CD8-positive, alpha-beta T cell (primary cell): ENCODE measurements at regions of chr11 and their contacts with region 1.

Region 1: DNA sequence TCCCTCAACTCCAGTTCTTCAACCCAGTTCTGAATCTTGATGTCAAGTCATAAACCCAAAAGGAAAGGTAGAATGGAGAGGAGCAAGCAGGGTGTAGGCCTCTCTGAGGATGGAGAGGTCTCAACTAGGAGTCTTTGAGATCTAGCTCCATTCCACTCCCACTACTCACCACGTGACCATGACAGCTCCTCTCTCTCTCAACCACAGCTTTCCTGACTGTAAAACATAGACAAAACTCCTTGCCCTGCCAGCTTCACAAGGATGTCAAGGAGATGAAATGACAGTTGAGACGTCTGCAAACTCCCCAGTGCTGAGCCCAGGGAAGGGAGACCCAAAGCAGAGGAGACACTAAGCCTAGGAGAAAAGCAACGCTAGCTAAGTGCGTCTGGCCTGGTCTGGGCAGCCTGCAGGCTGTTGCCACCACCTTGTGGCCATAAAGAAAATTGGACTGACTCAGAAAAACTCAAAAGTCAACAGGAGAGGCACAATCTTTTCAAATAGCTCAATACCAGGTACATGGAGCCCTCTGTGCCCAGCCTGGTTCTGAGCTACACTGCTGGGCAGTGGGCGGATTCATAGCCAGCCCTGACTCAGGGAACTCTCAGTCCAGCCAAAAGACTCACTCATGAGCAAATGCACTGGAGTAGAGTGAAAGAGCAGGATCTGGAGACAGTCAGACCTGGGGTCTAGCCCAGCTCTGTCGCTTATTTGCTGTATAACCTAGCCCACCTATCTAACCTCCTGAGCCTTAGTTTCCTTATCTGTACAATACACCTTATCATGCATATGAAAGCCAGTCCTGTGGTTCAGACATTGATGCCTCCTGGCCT is 3.4 kb downstream of the CLPB start:
- DNase-seq: peak in 5 of 9 experiments; percentile 29 to 64 (median 49)
- ATAC-seq: no peak
- H3K4me3 ChIP-seq: no peak overlapping the region
- H3K4me3 Mint-ChIP-seq: no peak overlapping the region
- H3K27ac ChIP-seq: no peak overlapping the region
- H3K27ac Mint-ChIP-seq: peak overlapping the region; percentile 23
- H3K4me1 ChIP-seq: peaks cover 9% of the 10 kb centered on the region
- H3K4me1 Mint-ChIP-seq: peaks cover 36% of the 10 kb centered on the region
- H3K27me3 ChIP-seq: no peaks in the 10 kb centered on the region
- H3K27me3 Mint-ChIP-seq: no peaks in the 10 kb centered on the region
- CTCF ChIP-seq: peak; percentile 58

Region 2: DNA sequence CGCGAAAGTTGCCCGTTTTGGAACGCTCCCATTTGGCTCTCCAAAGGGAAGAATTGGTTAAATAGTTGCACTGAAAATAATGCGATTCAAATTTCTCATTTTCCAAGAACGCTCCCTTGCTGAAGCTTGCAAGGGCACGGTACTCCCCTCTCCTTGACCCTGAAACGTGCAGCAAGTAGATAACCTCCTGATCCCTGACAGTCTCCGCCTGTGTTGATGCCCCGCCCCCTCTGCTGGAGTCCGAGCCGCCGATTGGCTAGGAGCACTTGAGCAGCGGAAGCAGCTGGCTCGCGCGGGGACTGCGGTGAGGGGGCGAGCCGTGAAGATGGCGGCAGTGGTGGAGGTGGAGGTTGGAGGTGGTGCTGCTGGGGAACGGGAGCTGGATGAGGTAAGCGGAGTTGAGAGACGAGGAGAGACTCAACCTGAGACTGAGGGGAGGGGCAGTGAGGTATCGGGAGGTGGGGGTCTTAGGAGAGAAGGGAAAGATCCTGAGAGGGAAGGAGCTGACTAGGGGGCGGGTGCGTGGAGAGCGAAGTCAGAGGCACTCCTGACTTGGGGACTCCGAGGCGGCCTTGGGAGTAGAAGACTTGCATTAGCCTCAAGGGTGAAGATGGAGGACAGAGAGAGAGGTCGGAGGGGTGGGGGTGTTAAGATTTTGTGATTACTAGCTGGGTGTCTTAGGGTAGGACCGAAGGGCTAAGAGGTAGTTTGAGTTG is 502.1 kb before region 1 on chr11 and contains the start of gene RNF121:
- CTCF ChIA-PET with region 1: no interaction called
- POLR2A ChIA-PET with region 1: no interaction called
- intact Hi-C with region 1: loop called in 1 of 2 experiments (anchors 1 kb)
- DNase-seq: peak; percentile 94 to 99 (median 97)
- ATAC-seq: peak; percentile 86
- H3K4me3 ChIP-seq: peak within 1 kb of the TSS; percentile 67 to 98
- H3K4me3 Mint-ChIP-seq: peak within 1 kb of the TSS; percentile 100
- H3K27ac ChIP-seq: peak within 1 kb of the TSS; percentile 90 to 96
- H3K27ac Mint-ChIP-seq: peak within 1 kb of the TSS; percentile 99
- H3K4me1 ChIP-seq: peaks cover 22% of the 10 kb centered on the region
- H3K4me1 Mint-ChIP-seq: peaks cover 57% of the 10 kb centered on the region
- H3K27me3 ChIP-seq: no peaks in the 10 kb centered on the region
- H3K27me3 Mint-ChIP-seq: no peaks in the 10 kb centered on the region
- CTCF ChIP-seq: no peak
- total RNA-seq, gene RNF121: 8.5 to 9.0 TPM

Region 3: GRCh38 chr11:71940561-71941219 is 490.3 kb before region 1 on chr11:
- CTCF ChIA-PET with region 1: no interaction called
- POLR2A ChIA-PET with region 1: no interaction called
- intact Hi-C with region 1: no loop called
- DNase-seq: no peak
- ATAC-seq: no peak
- H3K4me3 ChIP-seq: no peak overlapping the region
- H3K4me3 Mint-ChIP-seq: no peak overlapping the region
- H3K27ac ChIP-seq: no peak overlapping the region
- H3K27ac Mint-ChIP-seq: no peak overlapping the region
- H3K4me1 ChIP-seq: no peaks in the 10 kb centered on the region
- H3K4me1 Mint-ChIP-seq: peaks cover 6% of the 10 kb centered on the region
- H3K27me3 ChIP-seq: no peaks in the 10 kb centered on the region
- H3K27me3 Mint-ChIP-seq: no peaks in the 10 kb centered on the region
- CTCF ChIP-seq: no peak

Region 4: GRCh38 chr11:72030472-72031045 is 400.4 kb before region 1 on chr11:
- CTCF ChIA-PET with region 1: interaction called, 3 read pairs
- POLR2A ChIA-PET with region 1: no interaction called
- intact Hi-C with region 1: loop called (anchors 2 to 5 kb)
- DNase-seq: no peak
- ATAC-seq: no peak
- H3K4me3 ChIP-seq: no peak overlapping the region
- H3K4me3 Mint-ChIP-seq: no peak overlapping the region
- H3K27ac ChIP-seq: peak overlapping the region in 1 of 2 experiments; percentile 0
- H3K27ac Mint-ChIP-seq: peak overlapping the region; percentile 64
- H3K4me1 ChIP-seq: peaks cover 38% of the 10 kb centered on the region
- H3K4me1 Mint-ChIP-seq: peaks cover 71% of the 10 kb centered on the region
- H3K27me3 ChIP-seq: no peaks in the 10 kb centered on the region
- H3K27me3 Mint-ChIP-seq: no peaks in the 10 kb centered on the region
- CTCF ChIP-seq: no peak

Region 5: DNA sequence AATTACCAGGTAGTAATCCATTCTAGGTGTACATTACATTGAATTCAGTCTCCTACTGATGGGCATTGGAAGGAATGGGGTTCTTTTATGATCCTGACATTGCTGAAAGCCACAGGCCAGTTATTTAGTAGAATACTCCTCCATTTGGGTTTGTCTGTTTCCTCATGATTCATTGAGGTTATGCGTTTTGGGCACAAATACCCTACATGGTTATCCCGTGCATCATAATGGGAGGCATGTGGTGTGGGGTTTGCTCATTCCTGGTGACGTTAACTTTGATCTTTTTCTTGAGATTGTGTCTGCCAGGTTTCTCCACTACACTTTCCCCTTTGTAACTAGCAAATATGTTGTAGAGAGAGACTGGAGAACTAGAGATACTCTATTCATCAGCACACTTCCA is 289.9 kb before region 1 on chr11:
- CTCF ChIA-PET with region 1: interaction called, 6 read pairs
- POLR2A ChIA-PET with region 1: no interaction called
- intact Hi-C with region 1: loop called in 1 of 2 experiments (anchors 10 kb)
- DNase-seq: no peak
- ATAC-seq: no peak
- H3K4me3 ChIP-seq: no peak overlapping the region
- H3K4me3 Mint-ChIP-seq: no peak overlapping the region
- H3K27ac ChIP-seq: no peak overlapping the region
- H3K27ac Mint-ChIP-seq: no peak overlapping the region
- H3K4me1 ChIP-seq: no peaks in the 10 kb centered on the region
- H3K4me1 Mint-ChIP-seq: peaks cover 3% of the 10 kb centered on the region
- H3K27me3 ChIP-seq: no peaks in the 10 kb centered on the region
- H3K27me3 Mint-ChIP-seq: peaks cover 3% of the 10 kb centered on the region
- CTCF ChIP-seq: no peak

Region 6: GRCh38 chr11:72333661-72334060 is 97.3 kb before region 1 on chr11:
- CTCF ChIA-PET with region 1: no interaction called
- POLR2A ChIA-PET with region 1: no interaction called
- intact Hi-C with region 1: loop called (anchors 1 to 5 kb)
- DNase-seq: peak in 8 of 9 experiments; percentile 5 to 65 (median 37)
- ATAC-seq: peak; percentile 92
- H3K4me3 ChIP-seq: no peak overlapping the region
- H3K4me3 Mint-ChIP-seq: no peak overlapping the region
- H3K27ac ChIP-seq: no peak overlapping the region
- H3K27ac Mint-ChIP-seq: peak overlapping the region; percentile 69
- H3K4me1 ChIP-seq: peaks cover 19% of the 10 kb centered on the region
- H3K4me1 Mint-ChIP-seq: peaks cover 28% of the 10 kb centered on the region
- H3K27me3 ChIP-seq: no peaks in the 10 kb centered on the region
- H3K27me3 Mint-ChIP-seq: no peaks in the 10 kb centered on the region
- CTCF ChIP-seq: no peak

Region 7: DNA sequence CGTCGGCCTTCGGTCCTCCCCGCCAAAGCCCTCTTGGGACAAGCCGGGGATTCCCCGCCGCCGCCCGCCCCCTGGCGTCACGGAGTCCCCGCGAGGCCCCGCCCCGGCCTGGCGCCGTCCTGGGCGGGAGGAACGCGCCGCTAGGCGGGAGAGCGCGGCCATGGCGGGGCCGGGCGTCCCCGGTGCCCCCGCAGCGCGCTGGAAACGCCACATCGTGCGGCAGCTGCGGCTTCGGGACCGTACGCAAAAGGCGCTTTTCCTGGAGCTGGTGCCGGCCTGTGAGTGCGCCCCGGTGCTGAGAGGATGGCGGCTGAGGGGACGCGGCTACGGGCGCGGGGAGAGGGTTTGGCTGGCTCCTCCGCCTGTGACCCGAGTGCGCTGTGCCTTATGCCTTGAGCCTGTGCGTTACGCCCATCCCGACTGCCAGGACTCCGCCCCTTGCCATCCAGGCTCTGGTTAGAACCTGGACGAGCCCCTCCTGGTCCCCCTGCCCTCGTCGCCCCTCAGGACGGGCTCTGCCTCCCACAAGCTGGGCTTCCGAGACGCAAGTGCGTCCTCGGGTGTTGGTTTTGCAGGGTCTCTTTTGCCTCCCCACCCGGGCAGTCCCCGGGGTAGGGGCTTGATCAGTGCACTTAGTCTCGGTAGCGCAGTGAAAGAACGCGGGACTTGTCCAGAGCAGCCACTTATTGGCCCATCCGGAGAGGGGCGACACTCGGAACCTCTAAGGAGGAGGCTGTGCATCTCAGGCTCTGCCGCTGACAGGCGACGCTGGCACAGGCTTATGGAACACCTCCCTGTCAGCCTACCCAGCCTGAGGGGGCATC is 383.5 kb after region 1 on chr11 and contains the start of gene ATG16L2:
- CTCF ChIA-PET with region 1: no interaction called
- POLR2A ChIA-PET with region 1: no interaction called
- intact Hi-C with region 1: loop called (anchors 5 to 10 kb)
- DNase-seq: peak; percentile 83 to 96 (median 88)
- ATAC-seq: peak; percentile 78
- H3K4me3 ChIP-seq: peak within 1 kb of the TSS; percentile 97 to 98
- H3K4me3 Mint-ChIP-seq: peak within 1 kb of the TSS; percentile 99
- H3K27ac ChIP-seq: peak within 1 kb of the TSS; percentile 99 to 100
- H3K27ac Mint-ChIP-seq: peak within 1 kb of the TSS; percentile 99
- H3K4me1 ChIP-seq: peaks cover 26% of the 10 kb centered on the region
- H3K4me1 Mint-ChIP-seq: peaks cover 48% of the 10 kb centered on the region
- H3K27me3 ChIP-seq: no peaks in the 10 kb centered on the region
- H3K27me3 Mint-ChIP-seq: no peaks in the 10 kb centered on the region
- CTCF ChIP-seq: peak; percentile 20
- total RNA-seq, gene ATG16L2: 45.7 to 52.8 TPM

Region 8: GRCh38 chr11:74170694-74171629 is 1740.0 kb after region 1 on chr11 and contains the starts of genes C2CD3 and PPME1:
- CTCF ChIA-PET with region 1: no interaction called
- POLR2A ChIA-PET with region 1: no interaction called
- intact Hi-C with region 1: loop called in 1 of 2 experiments (anchors 10 kb)
- DNase-seq: peak; percentile 95 to 100 (median 96)
- ATAC-seq: peak; percentile 94
- H3K4me3 ChIP-seq: peak within 1 kb of the TSS; percentile 80 to 86
- H3K4me3 Mint-ChIP-seq: no peak within 1 kb of the TSS
- H3K27ac ChIP-seq: peak within 1 kb of the TSS; percentile 64 to 82
- H3K27ac Mint-ChIP-seq: no peak within 1 kb of the TSS
- H3K4me1 ChIP-seq: peaks cover 35% of the 10 kb centered on the region
- H3K4me1 Mint-ChIP-seq: peaks cover 36% of the 10 kb centered on the region
- H3K27me3 ChIP-seq: no peaks in the 10 kb centered on the region
- H3K27me3 Mint-ChIP-seq: no peaks in the 10 kb centered on the region
- CTCF ChIP-seq: no peak
- total RNA-seq, gene C2CD3: 27.1 to 30.5 TPM
- total RNA-seq, gene PPME1: 12.4 to 15.0 TPM